ENCODE measurements at regions of chr18 and their contacts with region 1.

Region 1: GRCh38 chr18:44013871-44014270 is 666.8 kb upstream of the SETBP1 start:
- DNase-seq: no peak
- ATAC-seq: no peak
- H3K4me3 ChIP-seq: no peak overlapping the region
- H3K4me3 Mint-ChIP-seq: no peak overlapping the region
- H3K27ac ChIP-seq: no peak overlapping the region
- H3K27ac Mint-ChIP-seq: no peak overlapping the region
- H3K4me1 ChIP-seq: no peaks in the 10 kb centered on the region
- H3K4me1 Mint-ChIP-seq: no peaks in the 10 kb centered on the region
- H3K27me3 ChIP-seq: no peaks in the 10 kb centered on the region
- H3K27me3 Mint-ChIP-seq: no peaks in the 10 kb centered on the region

Region 2: GRCh38 chr18:43952398-43952797 is 61.5 kb before region 1 on chr18:
- CTCF ChIA-PET with region 1: no interaction called
- POLR2A ChIA-PET with region 1: no interaction called
- intact Hi-C with region 1: loop called in 1 of 2 experiments (anchors 10 kb)
- DNase-seq: no peak
- ATAC-seq: no peak
- H3K4me3 ChIP-seq: no peak overlapping the region
- H3K4me3 Mint-ChIP-seq: no peak overlapping the region
- H3K27ac ChIP-seq: no peak overlapping the region
- H3K27ac Mint-ChIP-seq: no peak overlapping the region
- H3K4me1 ChIP-seq: no peaks in the 10 kb centered on the region
- H3K4me1 Mint-ChIP-seq: no peaks in the 10 kb centered on the region
- H3K27me3 ChIP-seq: no peaks in the 10 kb centered on the region
- H3K27me3 Mint-ChIP-seq: no peaks in the 10 kb centered on the region

Measured in naive thymus-derived CD4-positive, alpha-beta T cell (primary cell).